AG04449 (cell line): ENCODE measurements at regions of chr22 and their contacts with region 1.

Region 1: DNA sequence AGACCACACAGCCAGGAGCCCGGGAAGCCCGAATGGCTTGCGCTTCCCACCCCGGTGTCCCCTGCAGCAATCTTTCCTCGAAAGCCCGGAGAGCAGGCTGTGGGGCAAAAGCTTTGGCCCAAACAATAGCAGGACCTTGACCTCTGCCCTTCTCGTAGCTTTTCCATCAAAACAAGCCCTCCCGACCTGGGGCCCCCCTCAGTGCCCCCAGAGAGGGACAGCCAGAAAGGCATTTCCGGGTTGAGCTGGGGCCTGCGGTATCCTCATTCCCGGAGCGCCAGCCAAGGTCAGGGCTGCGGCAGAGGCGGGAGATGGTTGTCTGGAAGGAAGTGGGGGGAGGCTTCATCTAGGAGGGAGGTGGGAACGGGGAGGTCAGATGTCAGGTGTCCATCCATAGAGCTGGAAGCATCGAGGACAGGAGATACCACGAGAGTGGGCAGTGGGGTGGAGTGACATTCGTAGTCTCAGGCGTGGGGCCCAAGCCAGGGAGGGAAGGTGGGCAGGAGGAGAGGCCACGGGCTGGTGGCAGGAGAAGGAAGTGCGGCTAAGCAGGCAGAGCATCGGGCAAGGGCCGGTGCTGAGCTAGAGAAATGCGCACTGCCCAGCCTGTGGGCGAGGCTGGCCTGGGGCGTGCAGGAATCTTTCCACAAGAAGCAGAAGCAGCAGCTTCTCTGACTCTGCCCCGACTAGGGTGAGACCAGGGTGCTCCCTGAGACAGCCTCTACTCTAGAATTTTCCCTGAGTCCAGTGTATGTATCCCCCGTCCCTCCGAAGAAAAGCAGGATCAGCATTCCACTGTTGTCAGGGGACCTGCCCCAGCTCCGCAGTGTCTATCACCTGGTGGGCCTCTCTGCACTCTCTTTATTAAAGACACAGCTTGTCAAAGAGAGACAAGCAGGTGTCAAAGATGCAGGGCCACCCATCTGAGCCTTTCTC is 14.3 kb downstream of the PDGFB start:
- DNase-seq: no peak
- H3K4me3 ChIP-seq: no peak overlapping the region
- CTCF ChIP-seq: peak; percentile 13

Region 2: DNA sequence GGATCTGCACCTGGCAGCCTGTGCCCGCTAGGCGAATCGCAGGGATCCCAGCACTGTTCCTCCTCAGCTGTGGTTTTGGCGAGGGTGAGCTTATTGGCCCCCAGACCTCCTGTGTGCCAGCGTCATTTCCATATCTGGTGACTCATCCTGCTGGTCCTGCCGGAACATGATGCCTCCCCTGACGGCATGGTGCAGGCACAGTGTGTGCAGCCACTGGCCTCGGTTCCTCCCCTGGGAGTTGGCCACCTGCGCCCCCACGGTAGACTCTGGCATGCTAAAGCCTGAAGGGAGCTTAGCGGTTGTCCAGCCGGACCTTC is 1230.6 kb before region 1 on chr22:
- CTCF ChIA-PET with region 1: no interaction called
- POLR2A ChIA-PET with region 1: no interaction called
- DNase-seq: no peak
- H3K4me3 ChIP-seq: no peak overlapping the region
- CTCF ChIP-seq: no peak

Region 3: GRCh38 chr22:39135090-39135896 is 95.2 kb before region 1 on chr22:
- CTCF ChIA-PET with region 1: no interaction called
- POLR2A ChIA-PET with region 1: no interaction called
- DNase-seq: no peak
- H3K4me3 ChIP-seq: no peak overlapping the region
- CTCF ChIP-seq: peak; percentile 82

Region 4: GRCh38 chr22:39215426-39216120 is 15.0 kb before region 1 on chr22:
- CTCF ChIA-PET with region 1: interaction called, 15 read pairs
- POLR2A ChIA-PET with region 1: interaction called, 3 read pairs
- DNase-seq: no peak
- H3K4me3 ChIP-seq: no peak overlapping the region
- CTCF ChIP-seq: peak; percentile 42